Uterus (tissue), 4 donors: ENCODE measurements at regions of chr11 and their contacts with region 1.

Region 1: GRCh38 chr11:119323538-119324033 is 6.7 kb upstream of the MCAM start:
- DNase-seq: peak; percentile 79 to 91
- H3K4me3 ChIP-seq: no peak overlapping the region
- H3K27ac ChIP-seq: peak overlapping the region; percentile 67 to 93
- H3K4me1 ChIP-seq: peaks cover 0 to 6% of the 10 kb centered on the region in 2 donors
- H3K27me3 ChIP-seq: no peaks in the 10 kb centered on the region
- CTCF ChIP-seq: peak; percentile 81 to 83 (median 81)
- POLR2A ChIP-seq: no peak

Region 2: DNA sequence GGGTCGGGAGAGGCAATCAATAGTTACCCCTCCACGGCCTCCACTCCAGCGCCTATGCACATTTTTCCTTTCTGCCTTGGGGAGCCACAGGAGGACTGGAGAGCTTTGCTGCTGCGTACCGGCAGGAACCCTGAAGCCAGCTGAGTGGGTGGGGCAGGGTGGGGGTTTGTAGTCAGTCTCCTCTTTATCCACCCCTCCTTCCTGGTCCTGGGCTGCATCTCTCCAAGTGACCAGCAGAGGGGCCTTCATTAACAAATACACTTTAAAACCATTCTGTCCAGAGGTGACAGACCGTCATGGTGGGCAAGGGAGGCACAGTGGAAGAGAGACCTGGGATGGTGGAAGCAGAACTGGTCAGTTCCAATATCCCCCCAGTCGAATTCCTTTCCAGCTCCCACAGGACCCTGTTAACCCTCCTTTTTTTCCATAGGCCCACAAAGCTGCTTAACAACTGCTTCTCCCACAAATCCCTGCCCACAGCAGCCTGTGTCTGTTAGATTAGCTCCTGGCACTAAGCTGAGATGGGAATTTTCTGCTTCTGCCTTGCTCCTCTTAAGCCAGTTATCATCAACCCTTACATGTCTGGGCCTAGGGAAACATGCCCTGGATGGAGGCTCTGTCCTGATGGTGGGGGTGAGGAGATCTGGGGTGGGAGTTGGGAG is 178.6 kb before region 1 on chr11:
- intact Hi-C with region 1: no loop called
- DNase-seq: peak; percentile 46 to 56
- H3K4me3 ChIP-seq: no peak overlapping the region
- H3K27ac ChIP-seq: no peak overlapping the region
- H3K4me1 ChIP-seq: peaks cover 0 to 7% of the 10 kb centered on the region in 2 donors
- H3K27me3 ChIP-seq: no peaks in the 10 kb centered on the region
- CTCF ChIP-seq: peak; percentile 48 to 71 (median 58)
- POLR2A ChIP-seq: no peak

Region 3: DNA sequence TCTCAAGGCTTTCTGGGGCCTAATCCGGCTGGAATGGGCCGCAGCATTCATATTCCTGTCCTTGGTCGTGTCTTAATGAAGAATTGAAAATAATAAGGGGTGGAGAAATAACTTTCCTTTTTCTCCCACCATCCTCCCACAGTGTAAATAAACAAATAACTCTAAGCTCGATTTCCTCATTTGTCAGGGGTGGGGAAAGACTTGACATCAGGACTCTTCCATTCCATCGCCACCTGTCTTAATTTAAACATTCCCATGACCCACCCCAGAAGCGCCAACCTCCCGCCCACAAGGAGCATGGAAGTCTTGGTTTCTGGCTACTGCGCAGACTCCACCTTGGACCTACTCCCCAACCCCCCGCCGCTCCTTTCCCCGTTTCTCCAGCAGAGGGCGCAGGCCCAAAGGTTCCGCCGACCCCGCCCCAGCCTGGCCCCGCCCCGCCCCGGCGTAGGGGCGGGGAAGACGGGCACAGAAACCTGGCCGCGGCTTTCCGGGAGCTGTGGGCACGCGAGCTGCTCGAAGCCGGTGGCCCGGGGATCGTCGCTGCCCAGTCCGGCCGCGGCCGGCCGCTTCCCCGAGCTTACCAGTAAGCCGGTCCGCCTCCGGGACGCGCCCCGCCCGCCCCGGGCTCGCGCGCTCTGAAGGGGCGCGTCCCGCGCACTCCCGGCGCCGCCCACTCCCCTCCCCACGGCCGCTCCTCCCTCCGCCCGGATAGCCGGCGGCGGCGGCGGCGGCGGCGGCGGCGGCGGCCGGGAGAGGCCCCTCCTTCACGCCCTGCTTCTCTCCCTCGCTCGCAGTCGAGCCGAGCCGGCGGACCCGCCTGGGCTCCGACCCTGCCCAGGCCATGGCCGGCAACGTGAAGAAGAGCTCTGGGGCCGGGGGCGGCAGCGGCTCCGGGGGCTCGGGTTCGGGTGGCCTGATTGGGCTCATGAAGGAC is 117.7 kb before region 1 on chr11 and contains the start of gene CBL:
- intact Hi-C with region 1: loop called (anchors 5 kb)
- DNase-seq: peak; percentile 96 to 97
- H3K4me3 ChIP-seq: peak within 1 kb of the TSS; percentile 78 to 99
- H3K27ac ChIP-seq: peak within 1 kb of the TSS; percentile 98
- H3K4me1 ChIP-seq: peaks cover 0 to 5% of the 10 kb centered on the region in 2 donors
- H3K27me3 ChIP-seq: no peaks in the 10 kb centered on the region
- CTCF ChIP-seq: peak; percentile 80 to 93 (median 88)
- POLR2A ChIP-seq: peak; percentile 44 to 84
- total RNA-seq, gene CBL: 10.0 to 39.9 (median 13.0) TPM